Psoas muscle (tissue), 8 donors: ENCODE measurements at regions of chr3 and their contacts with region 1.

Region 1: DNA sequence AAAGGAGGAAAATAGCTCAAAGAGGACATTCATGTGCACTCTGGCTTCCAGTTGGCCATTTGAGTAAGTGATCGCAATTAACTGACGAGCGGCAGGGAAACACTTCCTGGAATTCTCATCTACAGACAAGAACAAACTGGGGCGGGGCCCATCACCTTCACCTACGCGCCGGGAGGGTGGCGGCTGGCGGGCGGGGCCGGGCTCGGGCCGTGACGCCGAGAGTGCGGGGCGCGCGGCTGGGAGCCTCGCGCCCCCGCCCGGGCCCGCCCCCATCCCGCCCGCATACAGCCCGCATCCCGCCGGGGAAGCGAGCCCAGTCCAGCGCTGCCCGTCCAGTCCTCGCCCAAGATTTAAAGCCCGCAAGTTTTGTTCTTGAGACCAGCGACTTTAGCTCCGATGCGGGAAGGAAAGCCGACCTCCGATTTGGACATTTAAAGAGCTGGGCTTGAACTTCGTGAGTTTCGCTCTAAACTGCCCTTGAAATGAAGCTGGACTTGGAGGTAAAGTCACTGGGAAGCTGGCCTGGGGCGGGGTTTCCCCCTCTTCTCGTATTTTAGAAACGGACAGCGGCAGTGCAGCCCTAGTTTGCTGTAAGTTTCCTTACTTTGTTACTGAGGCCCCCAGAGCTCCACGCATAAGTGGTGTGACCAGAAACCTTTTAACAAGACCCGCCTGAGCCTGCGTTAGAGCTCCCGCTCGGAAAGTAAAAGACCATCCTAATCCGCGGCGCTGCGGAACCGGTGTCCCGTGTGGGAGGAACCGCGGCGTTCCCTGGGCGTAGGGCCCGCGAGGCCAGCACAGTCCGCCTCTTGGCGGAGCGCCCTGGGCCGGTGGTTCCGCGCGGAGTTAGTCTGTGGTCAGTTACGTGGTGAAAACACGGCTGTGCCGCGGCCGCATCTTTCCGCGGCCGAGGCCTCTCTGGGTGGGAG is at the start of gene B3GNT5:
- DNase-seq: peak; percentile 80 to 88
- ATAC-seq: peak; percentile 78 to 87 (median 82)
- H3K4me3 ChIP-seq: peak within 1 kb of the TSS; percentile 89
- H3K27ac ChIP-seq: peak within 1 kb of the TSS; percentile 95
- H3K4me1 ChIP-seq: peaks cover 9% of the 10 kb centered on the region
- H3K27me3 ChIP-seq: no peaks in the 10 kb centered on the region
- CTCF ChIP-seq: no peak
- total RNA-seq, gene B3GNT5: 44.8 to 98.1 (median 63.7) TPM

Region 2: GRCh38 chr3:183188895-183189462 is 64.3 kb before region 1 on chr3:
- intact Hi-C with region 1: loop called in 1 of 2 experiments (anchors 5 kb)
- DNase-seq: peak; percentile 38 to 56
- ATAC-seq: peak in 3 of 4 donors; percentile 52 to 62 (median 54)
- H3K4me3 ChIP-seq: no peak overlapping the region
- H3K27ac ChIP-seq: no peak overlapping the region
- H3K4me1 ChIP-seq: no peaks in the 10 kb centered on the region
- H3K27me3 ChIP-seq: no peaks in the 10 kb centered on the region
- CTCF ChIP-seq: peak; percentile 21

Region 3: GRCh38 chr3:183285828-183286457 is 32.7 kb after region 1 on chr3:
- intact Hi-C with region 1: loop called in 1 of 2 experiments (anchors 2 kb)
- DNase-seq: peak; percentile 86 to 92
- ATAC-seq: peak; percentile 77 to 82 (median 82)
- H3K4me3 ChIP-seq: peak overlapping the region; percentile 9
- H3K27ac ChIP-seq: peak overlapping the region; percentile 94
- H3K4me1 ChIP-seq: peaks cover 24% of the 10 kb centered on the region
- H3K27me3 ChIP-seq: no peaks in the 10 kb centered on the region
- CTCF ChIP-seq: no peak

Region 4: GRCh38 chr3:183306798-183307671 is 53.8 kb after region 1 on chr3:
- intact Hi-C with region 1: loop called in 1 of 2 experiments (anchors 5 kb)
- DNase-seq: peak; percentile 66 to 87
- ATAC-seq: peak; percentile 78 to 85 (median 78)
- H3K4me3 ChIP-seq: peak overlapping the region; percentile 5
- H3K27ac ChIP-seq: peak overlapping the region; percentile 87
- H3K4me1 ChIP-seq: peaks cover 49% of the 10 kb centered on the region
- H3K27me3 ChIP-seq: no peaks in the 10 kb centered on the region
- CTCF ChIP-seq: no peak

Region 5: DNA sequence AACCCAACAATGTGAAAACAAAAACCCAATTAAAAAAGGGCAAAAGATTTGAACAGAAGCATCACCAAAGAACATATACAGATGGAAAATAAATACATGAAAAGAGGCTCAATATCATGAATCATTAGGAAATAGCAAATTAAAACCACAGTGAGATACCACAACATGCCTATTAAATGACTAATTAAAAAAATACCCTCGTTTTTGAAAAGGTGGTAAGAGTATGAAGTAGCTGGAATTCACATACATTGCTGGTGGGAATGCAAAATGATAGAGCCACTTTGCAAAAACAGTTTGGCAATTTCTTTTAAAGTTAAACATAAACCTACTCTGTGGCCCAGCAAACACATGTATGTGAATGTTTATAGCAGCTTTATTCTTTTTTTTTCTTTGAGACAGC is 75.6 kb after region 1 on chr3:
- intact Hi-C with region 1: loop called in 1 of 2 experiments (anchors 5 kb)
- DNase-seq: no peak
- ATAC-seq: no peak
- H3K4me3 ChIP-seq: no peak overlapping the region
- H3K27ac ChIP-seq: no peak overlapping the region
- H3K4me1 ChIP-seq: no peaks in the 10 kb centered on the region
- H3K27me3 ChIP-seq: no peaks in the 10 kb centered on the region
- CTCF ChIP-seq: no peak

Region 6: DNA sequence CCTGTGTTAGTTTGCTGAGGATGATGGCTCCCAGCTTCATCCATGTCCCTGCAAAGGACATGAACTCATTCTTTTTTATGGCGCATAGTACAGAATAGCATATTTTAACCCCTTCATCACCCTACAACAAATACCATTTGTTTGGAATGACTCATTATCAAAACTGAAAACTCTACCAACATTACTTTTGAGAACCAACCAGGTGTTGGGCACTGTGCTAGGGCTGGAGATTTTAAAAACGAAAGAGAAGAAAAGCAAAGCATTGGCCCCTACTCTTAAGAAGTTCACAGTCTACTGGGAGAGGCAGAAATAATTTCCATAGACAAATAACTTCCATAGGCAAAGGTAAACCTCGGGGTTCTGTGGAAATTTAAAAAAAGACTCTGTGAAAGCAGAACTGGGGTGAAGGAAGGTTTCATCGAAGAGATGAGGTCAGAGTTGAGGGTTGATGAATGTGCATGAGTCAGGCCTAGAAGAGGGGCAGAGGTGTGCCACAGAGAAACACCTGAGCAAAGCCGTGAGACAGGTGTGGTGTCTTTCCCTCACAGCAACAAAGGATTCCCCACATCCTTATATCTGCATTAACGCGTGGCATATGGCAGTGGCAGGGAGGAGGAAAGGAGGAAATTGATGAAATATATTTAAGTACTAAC is 124.2 kb after region 1 on chr3:
- intact Hi-C with region 1: loop called (anchors 2 to 5 kb)
- DNase-seq: no peak
- ATAC-seq: no peak
- H3K4me3 ChIP-seq: no peak overlapping the region
- H3K27ac ChIP-seq: no peak overlapping the region
- H3K4me1 ChIP-seq: no peaks in the 10 kb centered on the region
- H3K27me3 ChIP-seq: no peaks in the 10 kb centered on the region
- CTCF ChIP-seq: no peak

Region 7: GRCh38 chr3:183385698-183386613 is 132.7 kb after region 1 on chr3:
- intact Hi-C with region 1: loop called (anchors 2 to 5 kb)
- DNase-seq: no peak
- ATAC-seq: peak; percentile 80 to 90 (median 84)
- H3K4me3 ChIP-seq: no peak overlapping the region
- H3K27ac ChIP-seq: no peak overlapping the region
- H3K4me1 ChIP-seq: no peaks in the 10 kb centered on the region
- H3K27me3 ChIP-seq: no peaks in the 10 kb centered on the region
- CTCF ChIP-seq: peak; percentile 81

Region 8: DNA sequence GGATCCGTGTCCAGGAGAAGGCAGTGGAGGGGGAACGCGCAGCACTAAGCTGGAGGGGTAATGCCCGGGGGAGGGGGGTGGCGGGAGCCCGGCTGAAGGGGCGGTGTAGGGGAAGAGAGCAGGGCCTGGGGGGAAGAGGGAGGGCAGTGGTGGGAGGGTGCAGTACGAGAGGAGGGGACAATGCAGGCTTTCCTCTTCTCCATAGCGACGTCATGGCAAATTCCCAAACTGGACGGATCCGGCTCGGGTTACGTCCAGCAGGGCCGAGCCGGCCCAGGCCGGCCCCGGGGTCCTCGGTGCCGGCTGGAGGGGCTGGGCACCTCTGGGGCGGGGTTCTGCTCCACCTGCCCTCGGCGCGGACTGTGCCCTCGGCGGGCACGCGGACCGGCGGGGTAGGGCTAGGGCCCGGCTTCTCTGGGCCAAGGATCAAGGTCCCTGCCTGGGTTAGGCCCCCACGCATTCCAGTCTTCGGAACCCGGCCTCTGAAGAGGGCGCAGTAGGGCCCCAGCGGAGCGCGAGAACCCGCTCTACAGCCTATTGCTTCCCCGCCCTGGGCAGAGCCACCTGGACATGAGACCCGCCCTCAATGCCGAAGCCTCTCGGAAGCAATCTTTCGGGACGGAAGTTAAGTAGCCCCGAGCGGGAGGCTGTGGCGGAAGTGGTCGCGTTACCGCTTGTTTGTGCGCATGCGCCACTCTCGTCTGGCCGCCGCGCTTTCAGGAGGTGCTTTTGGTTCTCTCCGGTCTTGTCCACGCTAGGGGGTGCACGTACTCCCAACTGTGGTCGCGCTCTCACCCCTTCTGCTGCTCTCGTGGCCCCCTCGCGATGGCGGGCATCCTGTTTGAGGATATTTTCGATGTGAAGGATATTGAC is 1109.7 kb after region 1 on chr3:
- intact Hi-C with region 1: no loop called
- DNase-seq: peak; percentile 96 to 98
- ATAC-seq: peak; percentile 82 to 88 (median 84)
- H3K4me3 ChIP-seq: peak overlapping the region; percentile 96
- H3K27ac ChIP-seq: peak overlapping the region; percentile 98
- H3K4me1 ChIP-seq: peaks cover 11% of the 10 kb centered on the region
- H3K27me3 ChIP-seq: no peaks in the 10 kb centered on the region
- CTCF ChIP-seq: peak; percentile 41